ENCODE measurements at regions of chr13 and their contacts with region 1.

Region 1: DNA sequence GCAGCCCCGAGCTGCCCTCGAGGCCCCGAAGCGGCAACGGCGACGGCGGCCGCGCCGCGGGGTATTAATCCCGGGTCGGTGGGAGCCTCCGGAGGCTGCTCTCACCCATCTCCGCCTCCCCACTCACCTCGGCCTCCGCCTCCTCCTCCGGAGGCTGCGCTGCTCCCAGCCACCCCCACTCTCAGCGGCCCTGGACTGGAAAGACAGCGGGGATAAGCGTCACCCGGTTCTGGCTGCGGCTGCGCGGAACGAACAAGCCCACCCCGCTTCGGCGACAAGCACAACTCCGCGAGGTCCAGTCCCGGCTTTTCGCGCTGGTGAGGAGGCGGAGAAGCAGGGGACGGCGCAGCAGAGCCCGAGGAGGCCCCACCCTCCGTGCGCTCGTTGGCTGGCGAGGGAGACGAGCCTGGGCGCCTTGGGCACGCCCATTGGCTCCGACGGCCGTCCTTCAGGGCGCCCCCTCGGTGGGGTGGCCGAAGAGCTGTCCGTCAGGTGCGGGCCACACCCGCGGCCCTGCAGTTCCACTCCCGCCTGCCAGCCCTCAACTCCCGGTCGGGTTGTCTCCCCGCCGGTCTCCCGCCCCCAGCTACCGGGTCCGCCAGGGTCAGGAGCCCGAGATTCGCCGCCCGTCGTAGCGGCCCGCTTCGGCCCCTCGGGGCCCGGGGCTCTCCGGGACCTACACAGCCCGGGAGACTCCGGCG is at the start of gene ZMYM5:
- H3K4me3 ChIP-seq: peak within 1 kb of the TSS; percentile 61
- H3K27ac ChIP-seq: peak within 1 kb of the TSS; percentile 94
- H3K4me1 ChIP-seq: 0 out of 2 replicates have a peak, but pooled peaks cover 3% of the 10 kb centered on the region
- CTCF ChIP-seq: no peak; the same call in 1 of the 2 replicates

Region 2: GRCh38 chr13:19845758-19846157 is 17.7 kb before region 1 on chr13:
- CTCF ChIA-PET with region 1: no interaction called
- POLR2A ChIA-PET with region 1: interaction called, 20 read pairs
- H3K4me3 ChIP-seq: no peak overlapping the region
- H3K27ac ChIP-seq: no peak overlapping the region
- H3K4me1 ChIP-seq: no peaks in the 10 kb centered on the region
- CTCF ChIP-seq: no peak

Measured in HEK293 (cell line).